Right cardiac atrium (tissue), 5 donors: ENCODE measurements at regions of chr11 and their contacts with region 1.

Region 1: GRCh38 chr11:2892215-2893020 is 6.8 kb upstream of the CDKN1C start:
- DNase-seq: peak; percentile 70 to 89 (median 83)
- ATAC-seq: peak; percentile 56 to 61
- H3K4me3 ChIP-seq: peak overlapping the region; percentile 8
- H3K27ac ChIP-seq: peak overlapping the region; percentile 3
- H3K4me1 ChIP-seq: peaks cover 8% of the 10 kb centered on the region
- H3K27me3 ChIP-seq: no peaks in the 10 kb centered on the region

Region 2: GRCh38 chr11:2420502-2421225 is 471.8 kb before region 1 on chr11:
- intact Hi-C with region 1: loop called in 2 of 4 experiments (anchors 5 to 10 kb)
- DNase-seq: peak; percentile 70 to 91 (median 90)
- ATAC-seq: peak; percentile 94
- H3K4me3 ChIP-seq: no peak overlapping the region
- H3K27ac ChIP-seq: no peak overlapping the region
- H3K4me1 ChIP-seq: no peaks in the 10 kb centered on the region
- H3K27me3 ChIP-seq: no peaks in the 10 kb centered on the region